ENCODE measurements at regions of chr10 and their contacts with region 1.

Region 1: DNA sequence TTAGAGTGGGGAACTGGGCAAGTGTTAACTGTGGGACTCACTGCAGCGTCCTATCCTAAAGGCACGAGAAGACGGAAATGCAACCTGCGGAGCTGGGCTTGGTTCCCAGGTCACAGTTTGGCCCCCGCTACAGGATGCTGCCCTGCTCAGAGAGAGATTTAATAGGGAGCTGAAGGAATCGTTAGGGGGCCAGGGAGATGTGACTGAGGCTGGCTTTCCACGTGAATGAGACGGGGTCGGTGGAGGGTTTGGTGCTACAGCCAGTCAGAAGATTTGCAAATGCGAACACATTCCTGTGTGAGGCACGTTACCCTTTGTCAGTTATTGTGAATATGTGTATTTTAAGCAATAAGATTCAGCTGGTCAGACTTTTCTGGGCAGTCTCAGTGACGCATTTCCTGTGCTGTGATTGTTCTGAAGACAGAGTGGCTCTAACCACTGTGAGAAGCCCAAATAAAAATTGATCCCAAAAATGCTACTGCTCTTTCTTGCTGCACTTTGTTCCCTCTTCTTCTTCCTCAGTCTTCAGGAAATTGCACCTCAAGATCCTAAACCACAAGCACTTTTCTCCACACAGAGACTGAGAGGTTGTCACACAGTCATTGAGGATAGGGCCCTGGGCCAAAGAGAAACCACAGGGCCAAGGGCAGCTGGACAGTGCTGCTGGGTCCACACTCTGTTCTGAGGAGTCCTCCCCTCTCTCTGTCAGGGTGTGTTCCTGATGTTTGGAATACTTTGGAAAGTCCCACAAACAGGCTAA is 21.2 kb downstream of the CYP17A1 start:
- DNase-seq: peak; percentile 48 to 94
- H3K4me3 ChIP-seq: peak overlapping the region in 1 of 2 donors; percentile 40
- H3K27ac ChIP-seq: peak overlapping the region; percentile 95 to 99
- H3K4me1 ChIP-seq: peaks cover 23 to 42% of the 10 kb centered on the region in 2 donors
- H3K27me3 ChIP-seq: no peaks in the 10 kb centered on the region
- CTCF ChIP-seq: no peak

Region 2: DNA sequence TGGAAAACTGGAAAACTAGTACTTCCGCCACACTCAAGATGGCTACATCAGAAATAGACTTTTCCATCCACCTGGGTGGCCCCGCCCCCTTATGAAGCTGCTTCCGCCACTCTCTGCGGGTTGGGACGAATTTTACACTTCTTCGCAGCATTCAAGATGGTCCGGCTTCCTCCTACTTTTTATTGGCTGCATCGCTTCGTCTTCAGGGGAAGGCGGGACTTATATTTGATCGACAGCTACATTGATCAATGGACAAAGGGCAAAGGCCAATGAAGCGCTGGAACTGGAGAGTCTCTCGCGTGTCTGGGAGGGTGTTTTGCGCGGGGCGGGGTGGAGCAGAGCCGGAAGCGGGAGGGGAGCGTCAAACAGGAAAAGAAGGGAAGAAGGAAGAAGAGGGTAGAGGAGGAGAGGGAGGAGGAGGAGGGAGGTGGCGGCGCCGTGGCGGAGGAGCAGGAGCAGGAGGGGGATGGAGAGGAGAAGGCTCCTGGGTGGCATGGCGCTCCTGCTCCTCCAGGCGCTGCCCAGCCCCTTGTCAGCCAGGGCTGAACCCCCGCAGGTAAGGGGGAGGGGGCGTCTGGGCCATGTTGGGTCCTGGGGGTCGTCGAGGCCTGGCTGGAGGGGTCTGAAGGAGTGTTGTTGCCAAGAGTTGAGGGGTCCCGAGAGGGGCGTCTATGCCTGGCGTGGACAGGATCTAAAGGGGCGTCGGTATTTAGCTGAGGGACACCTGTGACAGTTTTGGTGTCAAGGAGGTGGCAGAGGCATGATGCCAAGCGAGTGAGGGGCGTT is 72.2 kb before region 1 on chr10 and contains the start of gene WBP1L:
- intact Hi-C with region 1: loop called (anchors 2 kb)
- DNase-seq: peak; percentile 95 to 99
- H3K4me3 ChIP-seq: peak within 1 kb of the TSS; percentile 85 to 98
- H3K27ac ChIP-seq: peak within 1 kb of the TSS; percentile 97 to 99
- H3K4me1 ChIP-seq: peaks cover 8 to 25% of the 10 kb centered on the region in 2 donors
- H3K27me3 ChIP-seq: no peaks in the 10 kb centered on the region
- CTCF ChIP-seq: no peak
- total RNA-seq, gene WBP1L: 107 TPM

Region 3: DNA sequence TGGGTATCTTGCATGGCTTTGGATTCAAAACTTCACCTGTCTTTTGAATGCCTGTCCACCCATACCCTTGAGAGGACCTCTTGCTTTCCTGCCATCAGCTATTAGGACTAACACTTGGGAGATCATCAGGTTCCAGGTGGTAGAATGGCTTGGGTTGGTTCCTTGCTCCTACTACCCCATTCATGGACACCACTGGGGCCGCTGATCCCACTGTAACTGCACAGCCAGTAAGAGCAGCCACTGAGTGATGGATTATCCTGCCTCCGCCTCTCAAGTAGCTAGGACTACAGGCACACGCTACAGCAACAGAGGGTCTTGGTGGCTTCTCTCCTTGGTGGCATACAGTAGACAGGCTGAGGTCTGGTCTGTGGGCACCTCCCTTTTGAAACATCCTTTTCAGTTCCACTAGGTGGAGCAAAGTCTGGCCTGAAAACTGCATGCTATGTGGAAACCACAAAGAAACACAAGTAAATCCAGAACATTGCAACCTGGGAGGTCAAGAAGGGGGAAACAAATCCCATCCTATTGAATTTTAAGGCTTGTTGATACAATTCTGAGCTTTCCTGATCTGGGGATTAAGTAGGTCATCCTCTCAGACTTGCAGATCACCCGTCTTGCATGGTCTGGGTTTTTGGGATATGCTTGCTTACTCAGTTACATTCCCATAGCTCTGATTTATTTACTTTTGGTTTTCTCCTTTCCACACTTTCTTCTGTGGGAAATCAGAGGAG is 62.9 kb before region 1 on chr10:
- intact Hi-C with region 1: loop called (anchors 1 kb)
- DNase-seq: no peak
- H3K4me3 ChIP-seq: peak overlapping the region in 1 of 2 donors; percentile 43
- H3K27ac ChIP-seq: peak overlapping the region; percentile 95 to 96
- H3K4me1 ChIP-seq: peaks cover 21 to 49% of the 10 kb centered on the region in 2 donors
- H3K27me3 ChIP-seq: no peaks in the 10 kb centered on the region
- CTCF ChIP-seq: peak; percentile 59 to 61 (median 59)

Region 4: DNA sequence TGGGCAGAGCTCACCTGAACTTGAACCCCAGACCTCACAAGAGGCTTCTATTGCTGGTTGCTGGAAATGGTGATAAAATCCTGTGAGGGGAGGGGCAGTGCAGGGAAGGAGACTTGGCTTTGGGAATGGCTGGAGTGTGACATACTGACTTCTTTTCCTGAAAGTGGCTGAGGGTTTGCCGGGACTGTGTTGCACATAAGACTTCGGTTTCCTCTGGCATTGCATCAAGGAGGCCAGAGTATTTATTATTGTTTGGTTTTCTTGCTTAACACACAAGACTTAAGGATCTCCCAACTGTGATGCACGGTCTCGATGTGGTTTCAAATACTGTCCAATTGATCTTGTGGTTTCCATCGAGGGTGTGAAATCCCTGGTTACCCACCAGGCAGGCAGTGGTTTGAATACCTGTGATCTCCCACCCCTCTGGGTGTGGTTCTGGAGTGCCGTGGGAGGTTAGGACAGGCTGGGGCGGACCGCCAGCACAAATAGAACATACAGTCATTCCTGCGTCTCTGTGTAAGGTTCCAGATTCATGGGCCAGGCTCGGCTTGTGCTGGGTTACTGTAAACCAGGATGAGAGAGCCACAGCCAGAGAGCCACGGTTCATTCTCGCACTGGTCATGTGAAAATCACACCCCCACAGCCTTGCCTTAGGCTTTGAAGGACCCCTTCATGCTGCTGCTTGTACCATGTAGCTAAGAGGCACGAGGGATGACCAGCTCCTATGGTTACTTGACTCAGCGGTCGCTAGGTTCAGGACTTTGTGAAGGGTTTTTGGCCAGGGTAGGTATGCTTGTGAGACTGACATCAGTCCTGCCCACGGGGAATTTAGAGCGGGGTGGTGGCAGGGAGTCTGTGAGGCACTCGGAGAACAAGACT is 33.1 kb before region 1 on chr10:
- intact Hi-C with region 1: loop called (anchors 2 kb)
- DNase-seq: peak; percentile 62 to 95
- H3K4me3 ChIP-seq: peak overlapping the region; percentile 28 to 35
- H3K27ac ChIP-seq: peak overlapping the region; percentile 94 to 95
- H3K4me1 ChIP-seq: peaks cover 39 to 86% of the 10 kb centered on the region in 2 donors
- H3K27me3 ChIP-seq: no peaks in the 10 kb centered on the region
- CTCF ChIP-seq: no peak

Region 5: DNA sequence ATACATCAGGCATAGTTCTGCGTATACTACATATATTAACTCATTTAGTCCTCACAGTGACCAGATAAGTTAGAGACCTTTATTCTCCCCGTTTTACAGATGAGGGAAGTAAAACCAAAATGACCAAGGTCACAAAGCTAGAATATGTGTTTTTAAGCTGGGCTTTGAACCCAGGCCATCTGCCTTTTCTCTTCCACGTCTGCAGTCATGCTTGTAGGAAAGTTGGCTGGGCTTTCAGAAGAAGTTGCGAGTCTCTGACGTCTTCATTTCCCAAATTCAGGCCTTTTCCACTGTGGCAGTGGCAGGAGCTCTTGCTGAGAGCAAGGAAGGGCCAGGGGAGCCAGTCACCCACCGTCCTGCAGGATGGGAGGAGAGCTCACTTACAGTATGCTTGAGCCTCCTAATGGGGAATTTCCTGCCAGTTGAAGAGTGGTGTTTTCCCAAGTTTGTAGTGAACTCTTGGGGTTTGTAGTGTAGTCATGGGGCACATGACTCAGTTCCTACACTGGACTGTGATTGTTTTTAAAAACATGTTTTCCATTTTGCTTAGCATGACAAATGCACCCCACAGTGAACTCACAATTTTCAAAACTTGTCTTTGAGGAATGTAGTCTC is 12.9 kb before region 1 on chr10:
- intact Hi-C with region 1: loop called (anchors 2 kb)
- DNase-seq: peak in 1 of 2 donors; percentile 90
- H3K4me3 ChIP-seq: no peak overlapping the region
- H3K27ac ChIP-seq: peak overlapping the region; percentile 85 to 88
- H3K4me1 ChIP-seq: peaks cover 26 to 45% of the 10 kb centered on the region in 2 donors
- H3K27me3 ChIP-seq: no peaks in the 10 kb centered on the region
- CTCF ChIP-seq: no peak